GM23248 (cell line): ENCODE measurements at regions of chr2 and their contacts with region 1.

Region 1: GRCh38 chr2:147331790-147332419 is 512.9 kb upstream of the ACVR2A start:
- DNase-seq: peak; percentile 61
- H3K4me3 ChIP-seq: no peak overlapping the region
- H3K27ac ChIP-seq: no peak overlapping the region
- H3K4me1 ChIP-seq: 0 out of 2 replicates have a peak, but pooled peaks cover 5% of the 10 kb centered on the region
- H3K27me3 ChIP-seq: no peaks in the 10 kb centered on the region

Region 2: GRCh38 chr2:146917431-146918042 is 414.4 kb before region 1 on chr2:
- in situ Hi-C with region 1: loop called (anchors 25 kb)
- DNase-seq: peak; percentile 22
- H3K4me3 ChIP-seq: no peak overlapping the region
- H3K27ac ChIP-seq: no peak overlapping the region
- H3K4me1 ChIP-seq: no peaks in the 10 kb centered on the region
- H3K27me3 ChIP-seq: no peaks in the 10 kb centered on the region

Region 3: DNA sequence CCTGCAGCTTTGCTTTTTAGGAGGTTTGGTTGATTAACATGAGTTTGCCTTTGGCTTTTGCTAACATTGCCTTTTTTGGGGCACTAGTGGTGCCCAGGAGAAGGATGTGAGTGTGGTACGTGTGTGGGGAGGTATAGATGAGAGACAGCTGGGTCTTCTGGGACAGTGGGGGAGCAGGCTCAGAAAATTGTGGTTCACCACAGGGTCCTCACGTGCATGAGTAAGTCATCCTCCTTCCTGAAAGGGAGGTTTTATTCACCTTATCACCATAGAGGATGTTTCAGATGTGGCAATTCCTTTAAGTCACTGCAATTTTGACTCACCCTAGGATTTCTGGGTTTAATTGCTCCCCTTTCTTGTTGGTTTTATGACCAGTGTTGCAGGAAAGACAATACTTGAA is 1835.5 kb after region 1 on chr2:
- in situ Hi-C with region 1: no loop called
- DNase-seq: no peak
- H3K4me3 ChIP-seq: no peak overlapping the region
- H3K27ac ChIP-seq: no peak overlapping the region
- H3K4me1 ChIP-seq: no peaks in the 10 kb centered on the region
- H3K27me3 ChIP-seq: 0 out of 2 replicates have a peak, but pooled peaks cover 3% of the 10 kb centered on the region